Colonic mucosa (tissue), 4 donors: ENCODE measurements at regions of chr10 and their contacts with region 1.

Region 1: GRCh38 chr10:80451132-80451531 is 3.0 kb upstream of the TSPAN14 start:
- DNase-seq: no peak
- H3K4me3 ChIP-seq: no peak overlapping the region
- H3K27ac ChIP-seq: no peak overlapping the region
- H3K4me1 ChIP-seq: peaks cover 5% of the 10 kb centered on the region
- H3K27me3 ChIP-seq: no peaks in the 10 kb centered on the region
- CTCF ChIP-seq: no peak

Region 2: DNA sequence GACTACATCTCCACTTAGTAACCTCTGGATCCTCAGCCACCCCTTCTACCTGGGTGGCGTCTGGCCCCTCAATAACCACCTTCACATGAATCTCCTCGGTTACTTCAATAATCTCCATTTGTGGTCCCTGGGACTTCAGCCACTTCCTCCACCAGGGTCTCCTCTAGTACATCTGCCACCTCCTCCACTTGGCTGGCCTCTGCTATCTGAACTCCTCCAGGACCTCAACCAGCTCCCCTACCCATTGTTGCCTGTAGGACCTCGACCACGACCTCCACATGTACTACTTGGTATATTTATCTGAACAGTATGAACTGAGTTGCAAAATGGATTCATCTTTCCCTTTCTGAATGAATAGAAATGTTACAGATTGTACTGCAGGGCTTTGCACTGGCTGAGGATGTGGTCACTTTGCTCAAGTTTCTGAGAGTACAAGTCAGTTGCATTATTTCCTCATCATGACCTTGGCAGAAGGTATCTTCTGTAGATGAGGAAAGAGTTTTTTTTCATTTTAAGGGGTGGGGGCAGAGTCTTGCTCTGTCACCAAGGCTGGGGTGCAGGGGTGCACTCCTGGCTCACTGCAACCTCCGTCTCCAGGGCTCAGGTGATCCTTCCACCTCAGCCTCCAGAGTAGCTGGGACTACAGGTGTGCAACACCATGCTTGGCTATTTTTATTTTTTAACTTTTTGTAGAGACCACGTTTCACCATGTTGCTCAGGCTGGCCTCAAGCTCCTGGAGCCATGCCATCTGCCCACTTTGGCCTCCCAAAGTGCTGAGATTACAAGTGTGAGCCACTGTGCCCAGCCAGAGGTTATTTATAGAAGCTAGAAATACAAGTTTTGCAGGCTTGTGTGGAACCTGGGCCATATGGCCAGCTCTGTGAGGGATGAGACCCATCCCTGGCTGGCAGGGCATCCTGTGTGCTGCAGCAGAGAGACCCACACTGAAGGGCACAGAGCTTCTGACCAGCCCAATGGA is 197.6 kb before region 1 on chr10:
- intact Hi-C with region 1: no loop called
- DNase-seq: no peak
- H3K4me3 ChIP-seq: no peak overlapping the region
- H3K27ac ChIP-seq: no peak overlapping the region
- H3K4me1 ChIP-seq: no peaks in the 10 kb centered on the region
- H3K27me3 ChIP-seq: no peaks in the 10 kb centered on the region
- CTCF ChIP-seq: no peak

Region 3: GRCh38 chr10:80498833-80499741 is 48.0 kb after region 1 on chr10:
- intact Hi-C with region 1: loop called (anchors 2 kb)
- DNase-seq: peak; percentile 86
- H3K4me3 ChIP-seq: no peak overlapping the region
- H3K27ac ChIP-seq: peak overlapping the region; percentile 79
- H3K4me1 ChIP-seq: peaks cover 40% of the 10 kb centered on the region
- H3K27me3 ChIP-seq: no peaks in the 10 kb centered on the region
- CTCF ChIP-seq: no peak

Region 4: GRCh38 chr10:80699602-80700039 is 248.5 kb after region 1 on chr10:
- intact Hi-C with region 1: no loop called
- DNase-seq: peak; percentile 82
- H3K4me3 ChIP-seq: no peak overlapping the region
- H3K27ac ChIP-seq: no peak overlapping the region
- H3K4me1 ChIP-seq: no peaks in the 10 kb centered on the region
- H3K27me3 ChIP-seq: no peaks in the 10 kb centered on the region
- CTCF ChIP-seq: peak; percentile 78